ENCODE measurements at regions of chr6 and their contacts with region 1.

Region 1: DNA sequence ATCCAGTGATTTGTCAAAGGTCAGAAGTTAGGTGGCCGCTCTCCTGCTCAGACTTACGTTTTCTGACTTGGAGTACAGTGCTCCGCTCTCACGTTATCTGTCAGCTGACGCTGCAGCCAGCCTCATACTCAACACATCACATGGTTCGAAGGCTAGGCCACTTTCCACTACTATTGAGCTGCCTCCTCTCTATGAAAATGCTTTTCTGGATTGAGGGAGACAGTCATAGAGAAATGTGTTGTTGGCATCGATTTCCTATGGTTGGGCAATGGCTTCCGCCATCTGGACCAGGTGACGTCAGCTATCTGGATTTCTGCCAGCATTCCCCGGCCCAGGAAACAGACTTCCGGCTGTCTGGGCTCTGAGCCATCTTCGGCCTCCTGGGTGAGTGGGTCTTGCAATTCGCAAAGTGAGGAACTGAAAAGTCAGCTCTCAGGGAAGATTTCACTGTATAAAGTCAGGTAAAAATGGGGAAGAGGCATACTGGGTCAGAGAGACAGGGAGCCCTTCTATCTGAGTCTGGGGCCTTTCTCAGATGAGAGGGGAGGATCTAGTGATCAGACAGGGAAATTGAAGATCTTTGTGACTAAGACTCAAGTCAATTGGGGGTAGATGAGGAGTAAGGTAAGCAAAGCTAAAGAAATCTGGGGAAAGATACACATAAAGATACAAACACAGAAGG is 37.5 kb upstream of the IER3 start:
- DNase-seq: peak; percentile 81 to 89
- ATAC-seq: peak; percentile 86 to 87
- H3K4me3 ChIP-seq: peak overlapping the region in 1 of 4 donors; percentile 23
- H3K27ac ChIP-seq: peak overlapping the region; percentile 73 to 83 (median 74)
- H3K4me1 ChIP-seq: peaks cover 26 to 34% of the 10 kb centered on the region in 2 donors
- H3K27me3 ChIP-seq: no peaks in the 10 kb centered on the region
- CTCF ChIP-seq: no peak
- POLR2A ChIP-seq: peak in 1 of 2 donors; percentile 22

Region 2: DNA sequence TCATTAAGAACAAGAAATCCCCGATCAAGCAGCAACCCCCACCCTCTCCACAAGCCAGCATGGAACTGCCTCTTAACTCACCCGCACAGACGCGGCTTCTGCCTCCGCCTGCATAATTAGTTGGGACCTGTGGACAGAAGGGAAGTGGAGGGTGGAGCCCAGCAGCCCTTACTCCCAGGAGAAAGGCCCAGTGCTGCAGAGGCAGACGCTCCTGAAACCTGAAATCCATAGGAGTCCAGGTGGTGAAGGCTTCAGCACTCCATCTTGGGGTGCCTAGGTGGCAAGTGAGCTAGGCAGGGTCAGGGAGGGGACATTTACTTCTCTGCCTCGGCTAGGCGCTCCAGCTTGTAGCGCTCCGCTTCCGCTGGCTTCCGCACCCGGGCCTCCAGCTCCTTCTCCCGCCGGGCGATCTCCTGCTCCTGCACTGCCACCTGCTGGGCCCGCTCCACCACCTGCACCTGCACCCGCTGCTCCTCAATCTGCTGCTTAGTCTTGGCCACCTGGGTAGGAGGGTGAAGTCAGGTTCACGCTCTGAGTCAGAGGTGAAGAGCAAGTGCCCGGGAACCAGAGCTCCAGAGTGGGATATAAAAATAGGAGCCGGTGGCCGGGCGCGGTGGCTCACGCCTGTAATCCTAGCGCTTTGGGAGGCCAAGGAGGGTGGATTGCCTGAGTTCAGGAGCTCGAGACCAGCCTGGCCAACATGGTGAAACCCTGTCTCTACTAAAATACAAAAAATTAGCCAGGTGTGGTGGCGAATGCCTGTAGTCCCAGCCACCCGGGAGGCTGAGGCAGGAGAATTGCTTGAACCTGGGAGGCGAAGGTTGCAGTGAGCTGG is 51.1 kb before region 1 on chr6:
- in situ Hi-C with region 1: no loop called
- intact Hi-C with region 1: no loop called
- DNase-seq: peak in 1 of 2 donors; percentile 48
- ATAC-seq: peak in 1 of 2 donors; percentile 46
- H3K4me3 ChIP-seq: no peak overlapping the region
- H3K27ac ChIP-seq: peak overlapping the region in 1 of 4 donors; percentile 26
- H3K4me1 ChIP-seq: peaks cover 0 to 6% of the 10 kb centered on the region in 2 donors
- H3K27me3 ChIP-seq: no peaks in the 10 kb centered on the region
- CTCF ChIP-seq: peak; percentile 9 to 47 (median 38)
- POLR2A ChIP-seq: no peak

Region 3: GRCh38 chr6:30752157-30752927 is 29.5 kb before region 1 on chr6:
- in situ Hi-C with region 1: no loop called
- intact Hi-C with region 1: loop called (anchors 2 kb)
- DNase-seq: peak; percentile 93 to 98
- ATAC-seq: peak; percentile 97
- H3K4me3 ChIP-seq: peak overlapping the region in 2 of 4 donors; percentile 0 to 1
- H3K27ac ChIP-seq: peak overlapping the region; percentile 86 to 95 (median 92)
- H3K4me1 ChIP-seq: peaks cover 19 to 22% of the 10 kb centered on the region in 2 donors
- H3K27me3 ChIP-seq: no peaks in the 10 kb centered on the region
- CTCF ChIP-seq: peak in 3 of 5 experiments; percentile 12 to 19 (median 13)
- POLR2A ChIP-seq: peak; percentile 19 to 31

Region 4: GRCh38 chr6:30974488-30975252 is 192.8 kb after region 1 on chr6:
- in situ Hi-C with region 1: no loop called
- intact Hi-C with region 1: no loop called
- DNase-seq: no peak
- ATAC-seq: no peak
- H3K4me3 ChIP-seq: no peak overlapping the region
- H3K27ac ChIP-seq: no peak overlapping the region
- H3K4me1 ChIP-seq: no peaks in the 10 kb centered on the region
- H3K27me3 ChIP-seq: no peaks in the 10 kb centered on the region
- CTCF ChIP-seq: no peak
- POLR2A ChIP-seq: no peak